Calu3 (cell line): ENCODE measurements at regions of chr20 and their contacts with region 1.

Region 1: GRCh38 chr20:56358596-56359211 is at the start of gene FAM210B:
- DNase-seq: peak; percentile 86
- H3K4me3 Mint-ChIP-seq: peak within 1 kb of the TSS; percentile 76
- H3K27ac Mint-ChIP-seq: no peak within 1 kb of the TSS
- H3K4me1 Mint-ChIP-seq: no peaks in the 10 kb centered on the region
- H3K27me3 Mint-ChIP-seq: peaks cover 12% of the 10 kb centered on the region
- CTCF ChIP-seq: no peak
- total RNA-seq, gene FAM210B: 8.7 and 9.4 TPM in 2 replicates

Region 2: GRCh38 chr20:56373940-56374339 is 15.2 kb after region 1 on chr20:
- CTCF ChIA-PET with region 1: no interaction called
- intact Hi-C with region 1: no loop called
- DNase-seq: peak; percentile 10
- H3K4me3 Mint-ChIP-seq: no peak overlapping the region
- H3K27ac Mint-ChIP-seq: peak overlapping the region; percentile 24
- H3K4me1 Mint-ChIP-seq: no peaks in the 10 kb centered on the region
- H3K27me3 Mint-ChIP-seq: no peaks in the 10 kb centered on the region
- CTCF ChIP-seq: no peak

Region 3: GRCh38 chr20:56392282-56393137 is 33.8 kb after region 1 on chr20 and contains the start of gene CSTF1:
- CTCF ChIA-PET with region 1: interaction called, 5 read pairs
- intact Hi-C with region 1: loop called (anchors 5 kb)
- DNase-seq: peak; percentile 99
- H3K4me3 Mint-ChIP-seq: no peak within 1 kb of the TSS
- H3K27ac Mint-ChIP-seq: no peak within 1 kb of the TSS
- H3K4me1 Mint-ChIP-seq: peaks cover 26% of the 10 kb centered on the region
- H3K27me3 Mint-ChIP-seq: no peaks in the 10 kb centered on the region
- CTCF ChIP-seq: no peak
- total RNA-seq, gene CSTF1: 41.0 and 44.3 TPM in 2 replicates